Brain microvascular endothelial cell (primary cell): ENCODE measurements at regions of chr2 and their contacts with region 1.

Region 1: DNA sequence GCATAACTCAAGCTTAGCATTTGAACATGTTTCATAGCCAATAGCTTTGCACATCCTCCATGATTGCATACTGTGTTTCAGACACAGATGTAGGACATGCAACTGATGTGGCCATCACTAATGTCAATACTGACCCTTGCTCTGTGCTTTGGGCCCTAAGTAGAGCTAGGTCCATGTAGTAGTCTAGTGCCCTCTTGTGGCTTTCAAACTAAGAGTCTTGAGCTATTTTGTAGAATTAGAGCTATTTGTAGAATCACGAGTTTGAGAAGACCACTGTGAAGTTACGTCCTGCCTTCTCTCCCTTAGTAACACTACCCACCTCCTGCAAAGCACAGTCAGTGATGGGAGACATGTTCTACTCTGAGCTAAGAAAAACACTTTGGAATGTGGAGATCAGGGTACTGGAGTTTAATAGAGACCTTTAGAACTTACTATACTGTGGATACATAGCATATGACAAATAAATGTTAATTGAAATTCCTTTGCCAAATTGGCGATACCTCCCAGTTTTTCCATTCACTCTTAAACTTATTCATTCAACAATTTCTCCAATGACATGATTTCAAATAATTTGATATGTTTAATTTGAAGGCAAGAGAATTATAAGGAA is 306.5 kb upstream of the TNP1 start:
- DNase-seq: peak; percentile 29
- H3K4me3 ChIP-seq: no peak overlapping the region
- H3K27ac ChIP-seq: no peak overlapping the region
- H3K27me3 ChIP-seq: no peaks in the 10 kb centered on the region
- CTCF ChIP-seq: peak; percentile 71

Region 2: GRCh38 chr2:216713691-216714336 is 452.5 kb before region 1 on chr2:
- in situ Hi-C with region 1: loop called (anchors 25 kb)
- DNase-seq: peak; percentile 83
- H3K4me3 ChIP-seq: no peak overlapping the region
- H3K27ac ChIP-seq: no peak overlapping the region
- H3K27me3 ChIP-seq: no peaks in the 10 kb centered on the region
- CTCF ChIP-seq: no peak